Sciatic nerve (tissue), 2 donors: ENCODE measurements at regions of chr2 and their contacts with region 1.

Region 1: GRCh38 chr2:206259376-206260187 is 14.9 kb upstream of the ZDBF2 start:
- DNase-seq: no peak
- ATAC-seq: no peak

Region 2: DNA sequence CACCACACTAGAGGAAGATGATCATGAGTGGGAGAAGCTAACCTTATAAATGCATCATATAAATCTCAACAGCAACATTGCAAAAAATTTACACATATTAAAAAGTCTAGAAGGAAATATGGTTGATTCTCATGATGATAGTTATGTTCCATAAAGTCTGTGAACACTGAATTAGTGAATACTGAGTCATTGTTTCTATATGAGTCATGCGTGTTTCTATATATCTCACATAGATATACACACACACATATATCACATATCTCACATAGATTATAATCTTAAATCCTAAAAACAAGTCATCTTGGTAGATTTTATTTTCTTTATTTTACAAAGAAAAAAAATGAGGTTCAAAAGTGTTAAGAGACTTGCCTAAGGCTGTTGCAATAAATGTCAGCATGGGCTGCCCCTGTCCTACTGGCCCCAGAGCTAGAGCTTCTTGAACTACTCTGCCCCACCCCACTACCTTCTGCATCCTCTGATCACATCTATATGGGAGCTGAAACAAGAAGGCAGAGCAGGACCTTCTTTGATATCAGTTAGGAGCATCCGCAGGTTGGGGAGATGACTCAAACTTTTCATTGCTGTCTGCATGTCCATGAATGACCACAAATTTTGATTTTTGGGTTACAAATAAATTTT is 101.9 kb after region 1 on chr2:
- intact Hi-C with region 1: no loop called
- DNase-seq: no peak
- ATAC-seq: no peak

Region 3: GRCh38 chr2:208249241-208249640 is 1989.7 kb after region 1 on chr2:
- intact Hi-C with region 1: loop called (anchors 5 kb)
- DNase-seq: no peak
- ATAC-seq: no peak